ENCODE measurements at regions of chr16 and their contacts with region 1.

Region 1: GRCh38 chr16:30091474-30092372 is at the start of gene TBX6:
- DNase-seq: peak; percentile 92
- H3K4me3 ChIP-seq: peak within 1 kb of the TSS; percentile 6 to 53 (median 47)
- H3K27ac ChIP-seq: peak within 1 kb of the TSS; percentile 46
- H3K4me1 ChIP-seq: peaks cover 23% of the 10 kb centered on the region
- H3K27me3 ChIP-seq: no peaks in the 10 kb centered on the region
- CTCF ChIP-seq: peak; percentile 56 to 86
- POLR2A ChIP-seq: peak; percentile 62
- total RNA-seq, gene TBX6: 0.42 and 0.60 TPM in 2 replicates

Region 2: GRCh38 chr16:29765167-29766032 is 326.3 kb before region 1 on chr16:
- CTCF ChIA-PET with region 1: no interaction called
- POLR2A ChIA-PET with region 1: no interaction called
- dilution Hi-C with region 1: no loop called
- intact Hi-C with region 1: no loop called
- DNase-seq: no peak
- H3K4me3 ChIP-seq: no peak overlapping the region
- H3K27ac ChIP-seq: no peak overlapping the region
- H3K4me1 ChIP-seq: no peaks in the 10 kb centered on the region
- H3K27me3 ChIP-seq: no peaks in the 10 kb centered on the region
- CTCF ChIP-seq: no peak
- POLR2A ChIP-seq: no peak

Region 3: DNA sequence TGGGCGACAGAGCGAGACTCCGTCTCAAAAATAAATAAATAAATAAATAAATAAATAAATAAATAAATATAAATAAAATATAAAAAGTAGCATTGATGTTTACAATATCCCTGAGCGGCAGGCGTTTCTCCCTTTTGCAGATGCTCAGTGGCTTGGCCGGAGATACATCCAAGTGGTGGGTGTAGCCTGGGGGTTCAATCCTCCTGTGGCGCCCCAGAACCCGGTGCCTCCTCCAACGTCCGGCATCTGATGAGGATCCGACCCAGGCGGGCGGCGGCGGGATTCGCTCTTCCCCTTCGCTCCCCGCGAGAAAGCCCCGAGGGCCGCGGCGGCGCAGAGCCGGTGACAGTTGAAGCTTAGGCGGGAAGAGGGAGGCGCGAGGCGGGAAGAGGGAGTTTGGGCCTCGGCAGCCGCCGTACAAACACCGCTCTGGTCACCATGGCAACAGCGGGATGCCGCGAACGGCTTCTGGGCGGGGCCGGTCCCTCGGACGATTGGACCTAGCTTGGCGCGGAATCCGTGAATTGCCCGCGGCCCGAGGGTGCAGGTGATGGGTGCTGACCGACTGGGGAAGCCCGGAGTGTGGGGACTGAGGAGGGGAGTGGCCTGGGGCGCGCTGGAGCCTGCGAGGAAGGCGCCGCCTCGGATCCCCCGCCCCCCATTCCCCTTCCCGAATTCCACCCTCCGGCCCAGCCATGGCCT is 38.9 kb before region 1 on chr16:
- CTCF ChIA-PET with region 1: interaction called, 55 read pairs
- POLR2A ChIA-PET with region 1: interaction called, 4 read pairs
- dilution Hi-C with region 1: no loop called
- intact Hi-C with region 1: loop called (anchors 2 kb)
- DNase-seq: peak; percentile 88
- H3K4me3 ChIP-seq: peak overlapping the region; percentile 62 to 75 (median 70)
- H3K27ac ChIP-seq: peak overlapping the region; percentile 72
- H3K4me1 ChIP-seq: peaks cover 35% of the 10 kb centered on the region
- H3K27me3 ChIP-seq: no peaks in the 10 kb centered on the region
- CTCF ChIP-seq: no peak
- POLR2A ChIP-seq: no peak

Region 4: GRCh38 chr16:30104494-30104968 is 12.8 kb after region 1 on chr16:
- CTCF ChIA-PET with region 1: interaction called, 52 read pairs
- POLR2A ChIA-PET with region 1: interaction called, 3 read pairs
- dilution Hi-C with region 1: no loop called
- intact Hi-C with region 1: no loop called
- DNase-seq: no peak
- H3K4me3 ChIP-seq: no peak overlapping the region
- H3K27ac ChIP-seq: no peak overlapping the region
- H3K4me1 ChIP-seq: no peaks in the 10 kb centered on the region
- H3K27me3 ChIP-seq: no peaks in the 10 kb centered on the region
- CTCF ChIP-seq: no peak
- POLR2A ChIP-seq: no peak

Region 5: DNA sequence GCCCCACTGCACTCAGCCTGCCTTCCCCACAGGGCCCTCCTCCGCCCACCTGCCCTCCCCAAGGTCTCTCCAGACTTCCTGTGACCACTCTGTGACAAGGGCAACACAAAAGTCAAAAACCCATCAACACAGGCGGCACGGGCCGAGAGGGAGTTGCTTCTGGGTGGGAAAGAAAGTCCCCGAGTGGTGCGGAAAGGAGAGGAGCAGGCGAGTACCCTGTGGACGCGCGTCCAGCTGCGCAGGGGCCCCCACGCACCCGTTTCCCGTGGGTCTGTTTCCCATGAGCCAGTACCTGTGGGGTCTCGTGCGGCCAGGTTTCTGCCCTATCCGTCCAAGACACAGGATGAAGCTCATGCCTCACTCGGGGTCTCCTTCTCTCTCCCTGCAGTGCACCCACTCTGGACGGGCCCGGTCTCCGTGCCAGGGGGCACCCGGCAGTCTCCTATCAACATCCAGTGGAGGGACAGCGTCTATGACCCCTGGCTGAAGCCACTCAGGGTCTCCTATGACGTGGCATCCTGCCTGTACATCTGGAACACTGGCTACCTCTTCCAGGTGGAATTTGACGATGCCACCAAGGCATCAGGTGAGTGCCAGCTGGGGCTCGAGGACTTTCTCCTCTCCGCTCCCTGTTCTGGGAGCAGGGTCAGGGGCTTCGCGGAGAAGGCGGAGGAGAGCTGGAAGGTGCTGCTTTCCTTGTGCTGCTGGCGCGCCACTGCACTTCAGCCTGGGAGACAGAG is 251.2 kb after region 1 on chr16:
- CTCF ChIA-PET with region 1: no interaction called
- POLR2A ChIA-PET with region 1: no interaction called
- dilution Hi-C with region 1: no loop called
- intact Hi-C with region 1: no loop called
- DNase-seq: no peak
- H3K4me3 ChIP-seq: no peak overlapping the region
- H3K27ac ChIP-seq: no peak overlapping the region
- H3K4me1 ChIP-seq: no peaks in the 10 kb centered on the region
- H3K27me3 ChIP-seq: no peaks in the 10 kb centered on the region
- CTCF ChIP-seq: no peak
- POLR2A ChIP-seq: no peak

Region 6: GRCh38 chr16:30407102-30407803 is 315.5 kb after region 1 on chr16 and contains the start of gene ZNF771:
- CTCF ChIA-PET with region 1: interaction called, 19 read pairs
- POLR2A ChIA-PET with region 1: no interaction called
- dilution Hi-C with region 1: no loop called
- intact Hi-C with region 1: loop called (anchors 10 kb)
- DNase-seq: peak; percentile 88
- H3K4me3 ChIP-seq: peak within 1 kb of the TSS; percentile 29 to 56 (median 47)
- H3K27ac ChIP-seq: peak within 1 kb of the TSS; percentile 71
- H3K4me1 ChIP-seq: peaks cover 22% of the 10 kb centered on the region
- H3K27me3 ChIP-seq: no peaks in the 10 kb centered on the region
- CTCF ChIP-seq: no peak
- POLR2A ChIP-seq: peak; percentile 92
- total RNA-seq, gene ZNF771: 10.3 and 11.7 TPM in 2 replicates

Region 7: GRCh38 chr16:30628627-30629540 is 537.2 kb after region 1 on chr16:
- CTCF ChIA-PET with region 1: interaction called, 4 read pairs
- POLR2A ChIA-PET with region 1: no interaction called
- dilution Hi-C with region 1: no loop called
- intact Hi-C with region 1: loop called (anchors 2 kb)
- DNase-seq: peak; percentile 77
- H3K4me3 ChIP-seq: peak overlapping the region in 1 of 3 experiments; percentile 27
- H3K27ac ChIP-seq: no peak overlapping the region
- H3K4me1 ChIP-seq: peaks cover 3% of the 10 kb centered on the region
- H3K27me3 ChIP-seq: peaks cover 2% of the 10 kb centered on the region in 2 experiments
- CTCF ChIP-seq: peak; percentile 85 to 91
- POLR2A ChIP-seq: no peak

Region 8: GRCh38 chr16:30775392-30776188 is 683.9 kb after region 1 on chr16:
- CTCF ChIA-PET with region 1: no interaction called
- POLR2A ChIA-PET with region 1: no interaction called
- dilution Hi-C with region 1: no loop called
- intact Hi-C with region 1: no loop called
- DNase-seq: peak; percentile 77
- H3K4me3 ChIP-seq: peak overlapping the region; percentile 20 to 62 (median 56)
- H3K27ac ChIP-seq: peak overlapping the region; percentile 26
- H3K4me1 ChIP-seq: peaks cover 8% of the 10 kb centered on the region
- H3K27me3 ChIP-seq: no peaks in the 10 kb centered on the region
- CTCF ChIP-seq: no peak
- POLR2A ChIP-seq: peak; percentile 88